Sciatic nerve (tissue), 2 donors: ENCODE measurements at regions of chr4 and their contacts with region 1.

Region 1: DNA sequence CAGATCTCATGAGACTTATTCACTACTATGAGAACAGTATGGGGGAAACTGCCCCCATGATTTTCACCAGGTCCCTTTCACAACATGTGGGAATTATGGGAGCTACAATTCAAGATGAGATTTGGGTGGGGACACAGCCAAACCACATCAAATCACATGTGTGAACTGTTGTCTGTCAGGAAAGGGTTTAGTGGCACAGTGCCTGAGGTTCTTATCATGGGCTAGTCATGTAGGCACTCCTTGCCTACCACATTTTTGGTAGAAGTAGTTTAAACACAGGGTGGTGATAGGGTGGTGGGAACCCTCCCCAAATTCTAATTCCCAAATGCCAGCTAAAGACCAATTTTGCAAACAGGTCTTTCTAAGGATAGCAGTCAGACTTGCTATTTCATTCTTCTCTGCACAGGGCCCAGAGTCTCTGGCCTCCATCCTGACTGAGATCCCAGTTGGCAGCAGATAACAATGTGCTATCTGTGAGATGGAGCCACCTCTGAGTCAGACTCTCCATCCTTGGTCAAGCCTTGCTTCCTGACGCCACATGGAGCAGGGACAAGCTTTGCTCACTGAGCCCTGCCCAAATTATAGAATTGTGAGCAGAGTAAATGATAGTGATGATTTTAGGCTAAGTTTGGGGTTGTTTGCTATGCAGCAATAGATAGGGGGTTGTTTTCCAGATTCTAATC is 33.5 kb upstream of the SETD7 start:
- DNase-seq: no peak
- ATAC-seq: peak; percentile 81

Region 2: DNA sequence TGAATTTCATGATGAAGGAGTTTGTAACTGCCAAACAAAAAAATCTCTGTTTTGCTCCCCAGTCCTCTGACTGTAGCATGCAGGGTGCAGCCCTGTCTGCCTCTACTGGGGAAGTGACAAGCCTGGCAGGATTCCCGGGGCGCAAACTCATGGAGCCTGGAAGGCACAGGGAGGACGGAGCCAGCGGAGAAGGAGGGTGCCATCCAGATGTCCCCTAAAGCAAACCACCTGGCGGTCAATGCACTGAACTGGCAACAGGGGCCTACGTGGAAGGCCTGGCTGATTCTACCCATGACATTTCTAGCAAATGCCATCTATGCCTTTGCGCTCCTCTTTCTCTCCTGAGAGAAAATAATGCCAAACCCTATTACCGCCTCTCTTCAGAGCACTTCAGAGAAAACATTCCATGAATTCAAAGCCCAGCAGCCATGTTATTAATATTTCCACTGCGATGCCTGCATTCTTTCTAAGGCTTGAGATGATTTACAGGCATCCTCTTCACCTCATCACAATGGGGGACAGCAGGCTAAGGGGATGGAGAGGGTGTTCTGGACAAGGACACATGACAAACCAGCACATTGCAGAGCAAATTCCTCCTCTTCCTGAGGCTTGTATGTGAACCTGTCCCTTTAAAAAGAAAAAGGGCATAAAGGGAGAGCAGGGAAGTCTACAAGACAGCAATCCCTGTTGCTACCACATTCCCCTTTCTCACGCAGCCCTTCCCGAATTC is 903.2 kb before region 1 on chr4:
- intact Hi-C with region 1: loop called (anchors 5 kb)
- DNase-seq: no peak
- ATAC-seq: no peak

Region 3: DNA sequence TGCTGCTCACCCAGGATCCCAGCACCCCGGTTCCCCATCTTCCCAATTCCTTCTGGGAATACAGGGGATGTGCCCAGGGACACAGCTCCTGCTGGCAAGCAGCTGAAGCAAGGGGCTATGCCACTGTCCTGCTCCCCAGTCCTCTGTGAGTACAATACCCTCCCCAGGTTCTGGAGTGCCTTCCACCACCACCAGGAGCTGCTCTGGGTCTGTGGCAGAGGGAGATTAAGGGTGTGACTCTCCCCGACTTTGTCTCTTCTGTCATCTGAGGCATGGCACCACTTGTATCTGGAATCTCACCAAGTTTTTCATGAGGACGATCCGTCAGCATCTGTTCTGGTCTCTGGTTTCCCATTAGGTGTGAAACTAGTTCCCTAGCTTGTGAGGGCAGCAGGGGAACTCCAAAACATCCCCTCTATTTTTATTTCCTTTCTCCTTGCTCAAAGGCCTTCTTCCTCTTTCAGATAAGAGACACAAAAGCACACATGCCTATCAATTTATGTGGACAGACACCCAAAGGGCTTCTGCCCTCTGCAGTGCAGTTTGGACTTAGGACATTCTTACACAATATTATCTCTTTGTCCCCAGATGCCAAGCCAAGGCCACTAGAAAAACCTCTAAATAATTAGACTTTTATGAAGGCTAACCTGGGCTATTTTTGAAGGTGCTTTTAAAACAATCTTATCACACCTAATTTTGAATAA is 103.0 kb after region 1 on chr4:
- intact Hi-C with region 1: no loop called
- DNase-seq: no peak
- ATAC-seq: no peak

Region 4: DNA sequence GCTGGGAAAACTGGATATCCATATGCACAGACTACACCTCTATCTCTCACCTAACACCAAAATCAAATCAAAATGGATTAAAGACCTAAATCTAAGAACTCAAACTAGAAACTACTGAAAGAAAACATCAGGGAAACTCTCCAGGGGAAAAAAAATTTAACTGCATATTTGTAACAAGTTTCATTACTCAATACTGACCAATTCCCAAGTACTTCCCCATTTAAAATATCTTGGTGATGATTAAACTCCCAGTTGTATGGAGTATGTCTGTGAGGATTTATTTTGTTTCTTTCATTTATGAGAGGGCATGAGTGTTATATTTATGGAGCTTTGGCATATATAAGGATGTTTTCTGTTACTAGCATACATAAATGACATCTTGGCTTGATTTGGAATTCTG is 1934.6 kb after region 1 on chr4:
- intact Hi-C with region 1: no loop called
- DNase-seq: no peak
- ATAC-seq: no peak